ENCODE measurements at regions of chr6 and their contacts with region 1.

Region 1: DNA sequence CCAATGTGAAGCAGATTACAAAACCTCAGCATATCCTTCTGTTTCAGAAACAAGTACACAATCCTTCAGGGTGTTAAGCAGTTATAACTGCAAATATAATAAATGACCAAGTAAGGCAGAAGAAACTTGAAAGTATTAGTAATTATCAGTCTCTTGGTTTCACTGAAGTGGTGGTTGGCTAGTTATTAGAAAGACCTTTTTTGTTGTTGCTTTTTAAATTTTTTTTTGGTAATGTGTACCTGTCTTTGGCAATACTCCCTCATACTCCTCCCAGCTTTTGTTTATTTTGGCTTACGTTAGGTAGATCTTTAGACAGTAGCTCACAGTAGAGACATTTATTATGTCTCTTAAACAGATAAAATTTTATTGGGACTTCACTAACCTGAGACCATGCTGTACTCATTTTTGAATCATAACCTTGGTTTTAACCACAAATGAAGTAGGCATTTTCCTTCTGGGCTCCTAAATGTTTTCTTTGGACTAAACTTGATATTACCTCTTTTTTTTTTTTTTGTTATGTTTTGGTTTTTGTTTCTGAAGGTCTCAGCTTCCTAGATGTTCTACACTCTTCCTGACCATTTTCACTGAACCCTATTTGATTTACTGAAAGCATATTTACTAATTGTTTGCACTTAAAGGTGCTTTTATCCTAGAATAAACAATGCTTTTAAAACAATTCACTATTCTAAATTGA is 6.4 kb downstream of the CD2AP start:
- DNase-seq: peak; percentile 90
- ATAC-seq: peak; percentile 92
- H3K4me3 ChIP-seq: peak overlapping the region; percentile 45
- H3K27ac ChIP-seq: peak overlapping the region; percentile 75
- H3K4me1 ChIP-seq: peaks cover 49% of the 10 kb centered on the region
- H3K27me3 ChIP-seq: no peaks in the 10 kb centered on the region
- CTCF ChIP-seq: no peak

Region 2: DNA sequence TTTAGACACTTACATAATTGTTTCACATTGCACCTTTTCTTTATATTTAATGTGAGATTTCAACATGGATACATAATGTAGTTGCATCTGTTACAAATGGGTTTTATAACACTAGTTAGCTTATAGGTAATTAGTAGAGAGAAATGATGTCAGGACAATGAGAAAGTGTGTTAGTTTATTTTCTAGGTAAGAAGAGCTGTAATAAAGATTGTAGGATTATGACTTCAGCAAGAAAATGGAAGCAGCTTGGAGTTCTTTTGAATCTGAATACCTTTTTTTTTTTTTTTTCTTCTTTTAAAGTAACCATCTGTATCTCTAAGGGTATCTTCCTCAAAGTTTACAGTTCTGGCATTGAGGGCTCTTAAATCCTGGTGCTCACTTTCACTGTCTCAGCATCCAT is 28.9 kb after region 1 on chr6:
- CTCF ChIA-PET with region 1: no interaction called
- POLR2A ChIA-PET with region 1: no interaction called
- intact Hi-C with region 1: no loop called
- DNase-seq: no peak
- ATAC-seq: no peak
- H3K4me3 ChIP-seq: no peak overlapping the region
- H3K27ac ChIP-seq: no peak overlapping the region
- H3K4me1 ChIP-seq: no peaks in the 10 kb centered on the region
- H3K27me3 ChIP-seq: no peaks in the 10 kb centered on the region
- CTCF ChIP-seq: no peak

Region 3: GRCh38 chr6:47524136-47524845 is 40.3 kb after region 1 on chr6:
- CTCF ChIA-PET with region 1: no interaction called
- POLR2A ChIA-PET with region 1: no interaction called
- intact Hi-C with region 1: no loop called
- DNase-seq: no peak
- ATAC-seq: no peak
- H3K4me3 ChIP-seq: no peak overlapping the region
- H3K27ac ChIP-seq: no peak overlapping the region
- H3K4me1 ChIP-seq: no peaks in the 10 kb centered on the region
- H3K27me3 ChIP-seq: no peaks in the 10 kb centered on the region
- CTCF ChIP-seq: no peak

Region 4: GRCh38 chr6:47581591-47581990 is 97.6 kb after region 1 on chr6:
- CTCF ChIA-PET with region 1: no interaction called
- POLR2A ChIA-PET with region 1: no interaction called
- intact Hi-C with region 1: no loop called
- DNase-seq: no peak
- ATAC-seq: no peak
- H3K4me3 ChIP-seq: no peak overlapping the region
- H3K27ac ChIP-seq: no peak overlapping the region
- H3K4me1 ChIP-seq: no peaks in the 10 kb centered on the region
- H3K27me3 ChIP-seq: no peaks in the 10 kb centered on the region
- CTCF ChIP-seq: no peak

Region 5: GRCh38 chr6:47595797-47596196 is 111.8 kb after region 1 on chr6:
- CTCF ChIA-PET with region 1: no interaction called
- POLR2A ChIA-PET with region 1: no interaction called
- intact Hi-C with region 1: loop called (anchors 10 kb)
- DNase-seq: peak; percentile 59
- ATAC-seq: peak; percentile 64; the same call in 1 of the 2 replicates
- H3K4me3 ChIP-seq: no peak overlapping the region
- H3K27ac ChIP-seq: no peak overlapping the region
- H3K4me1 ChIP-seq: peaks cover 12% of the 10 kb centered on the region
- H3K27me3 ChIP-seq: no peaks in the 10 kb centered on the region
- CTCF ChIP-seq: no peak